Cardiac septum (tissue), 1 donor: ENCODE measurements at regions of chr3 and their contacts with region 1.

Region 1: DNA sequence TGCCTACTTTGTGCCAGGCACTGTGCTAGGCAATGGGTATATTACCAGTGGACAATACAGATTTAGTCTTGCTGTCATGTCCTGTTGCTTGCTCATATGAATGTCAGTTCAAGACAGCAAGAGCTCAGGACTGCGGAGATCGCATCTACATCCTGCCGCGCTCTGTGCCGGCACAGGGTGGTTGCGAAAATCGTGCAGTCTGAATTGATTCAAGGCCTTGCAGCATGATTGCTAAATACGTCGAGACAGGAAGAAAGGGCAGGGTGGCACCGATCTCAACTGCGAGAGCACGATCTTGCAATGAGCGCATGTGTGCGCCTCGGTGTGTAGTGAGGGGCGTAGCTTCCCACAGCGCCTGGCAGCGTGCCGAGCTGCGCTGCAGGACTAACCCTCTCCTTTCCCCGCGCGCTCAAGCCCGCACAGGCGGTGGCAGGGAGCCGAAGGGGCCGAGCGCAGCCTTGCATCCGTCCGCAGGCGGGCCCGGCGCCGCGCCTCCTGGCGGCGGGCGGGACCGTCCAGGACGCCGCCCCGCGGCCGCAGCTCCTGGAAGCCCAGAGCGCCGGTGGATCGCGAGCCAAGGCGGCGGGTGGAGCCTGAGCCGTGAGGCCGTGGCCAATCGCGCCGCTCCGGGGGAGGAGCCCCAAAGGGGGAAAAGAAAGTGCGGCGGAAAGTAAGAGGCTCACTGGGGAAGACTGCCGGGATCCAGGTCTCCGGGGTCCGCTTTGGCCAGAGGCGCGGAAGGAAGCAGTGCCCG is at the start of gene IL1RAP:
- DNase-seq: peak; percentile 97
- total RNA-seq, gene IL1RAP: 20.4 TPM

Region 2: GRCh38 chr3:190321789-190322603 is 191.6 kb before region 1 on chr3 and contains the start of gene CLDN1:
- intact Hi-C with region 1: loop called (anchors 10 kb)
- DNase-seq: peak; percentile 82
- total RNA-seq, gene CLDN1: 0.57 TPM

Region 3: DNA sequence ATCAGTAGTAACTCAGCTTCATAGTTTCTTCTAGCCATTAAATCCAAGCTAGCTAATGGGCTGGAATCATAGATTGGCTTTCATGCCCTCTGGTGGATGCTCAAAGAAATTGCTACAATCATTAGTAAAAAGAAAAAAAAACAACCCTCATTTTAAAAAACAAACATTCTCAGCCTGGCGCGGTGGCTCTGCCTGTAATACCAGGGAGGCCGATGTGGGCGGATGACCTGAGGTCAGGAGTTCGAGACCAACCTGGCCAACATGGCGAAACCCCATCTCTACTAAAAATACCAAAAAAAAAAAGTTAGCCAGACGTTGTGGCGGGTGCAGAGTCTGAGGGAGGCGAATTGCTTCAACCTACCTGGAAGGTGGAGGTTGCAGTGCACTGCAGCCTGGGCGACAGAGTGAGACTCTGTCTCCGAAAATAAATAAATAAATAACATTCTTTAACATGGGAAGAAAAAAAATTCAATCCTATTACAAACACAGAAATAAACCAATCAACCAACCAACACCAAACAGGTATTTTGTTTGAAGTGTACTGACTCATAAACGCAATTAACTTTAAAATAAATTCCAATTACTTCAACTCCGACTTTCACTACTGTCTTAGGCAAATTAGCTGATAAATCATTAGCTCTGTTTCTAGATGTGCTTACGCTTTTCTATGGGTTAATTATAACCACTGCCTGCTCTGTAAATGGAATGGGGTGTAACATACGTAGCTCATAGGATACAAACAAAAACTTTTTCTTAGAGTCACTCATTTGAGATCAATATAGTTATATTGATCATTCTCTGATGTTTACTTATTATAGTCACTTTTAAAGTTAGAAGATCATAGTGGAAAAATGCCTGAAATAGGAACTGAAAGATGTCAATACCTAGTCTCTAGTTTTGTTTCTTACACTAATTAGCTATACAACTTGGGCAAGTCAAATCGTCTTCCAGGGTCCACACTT is 88.8 kb before region 1 on chr3:
- intact Hi-C with region 1: loop called (anchors 10 kb)
- DNase-seq: no peak

Region 4: DNA sequence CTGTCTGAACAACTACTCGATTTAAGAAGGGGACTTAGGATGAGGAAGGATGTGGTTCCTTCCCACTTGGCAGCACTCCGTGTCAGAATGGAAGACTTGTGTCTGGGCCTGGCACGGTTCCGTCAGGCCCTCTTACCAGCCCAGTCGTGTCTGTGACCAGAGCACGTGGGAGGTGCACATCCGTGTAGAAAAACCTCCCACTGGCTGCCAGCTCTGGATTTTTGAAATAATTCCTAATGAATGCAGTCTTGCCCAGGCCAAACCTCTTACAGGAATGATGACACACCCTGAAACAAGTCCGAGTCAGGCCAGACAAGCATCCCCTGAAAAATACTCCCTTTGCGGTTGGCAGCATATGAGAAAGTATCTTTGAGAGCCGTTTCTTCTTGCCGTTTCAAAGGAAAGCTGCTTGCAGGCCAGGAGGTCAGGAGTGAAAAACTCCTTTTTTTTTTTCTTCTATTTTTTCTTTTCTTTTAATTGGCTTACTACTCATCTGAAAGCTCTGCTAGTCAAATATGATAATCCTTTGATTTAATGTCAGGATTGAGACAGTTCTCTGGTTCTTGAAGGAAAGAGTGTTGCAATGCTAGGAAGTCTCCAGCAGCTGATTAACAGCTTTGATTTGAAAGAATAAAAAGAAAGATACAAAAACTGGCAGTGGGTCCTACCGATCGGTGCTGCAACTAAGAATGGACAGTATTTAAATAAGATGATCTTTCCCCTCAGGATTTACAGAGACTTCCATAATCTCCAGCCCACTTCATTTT is 20.1 kb after region 1 on chr3:
- intact Hi-C with region 1: loop called (anchors 2 kb)
- DNase-seq: peak; percentile 84

Region 5: GRCh38 chr3:190644753-190645152 is 131.2 kb after region 1 on chr3:
- intact Hi-C with region 1: loop called (anchors 10 kb)
- DNase-seq: no peak

Region 6: GRCh38 chr3:190701096-190701532 is 187.5 kb after region 1 on chr3:
- intact Hi-C with region 1: loop called (anchors 2 kb)
- DNase-seq: no peak